CD4-positive, alpha-beta memory T cell (primary cell): ENCODE measurements at regions of chr10 and their contacts with region 1.

Region 1: GRCh38 chr10:98408799-98409198 is 6.2 kb downstream of the PYROXD2 start:
- DNase-seq: no peak
- H3K4me3 ChIP-seq: no peak overlapping the region
- H3K4me3 Mint-ChIP-seq: no peak overlapping the region
- H3K27ac ChIP-seq: no peak overlapping the region
- H3K27ac Mint-ChIP-seq: no peak overlapping the region
- H3K4me1 ChIP-seq: no peaks in the 10 kb centered on the region
- H3K4me1 Mint-ChIP-seq: peaks cover 1 to 9% (median 3%) of the 10 kb centered on the region in 4 donors
- H3K27me3 ChIP-seq: no peaks in the 10 kb centered on the region
- H3K27me3 Mint-ChIP-seq: peaks cover 0 to 1% of the 10 kb centered on the region in 2 donors

Region 2: GRCh38 chr10:98425511-98426352 is 16.9 kb after region 1 on chr10:
- CTCF ChIA-PET with region 1: interaction called, 14 read pairs
- POLR2A ChIA-PET with region 1: interaction called, 9 read pairs
- intact Hi-C with region 1: no loop called
- DNase-seq: peak; percentile 19 to 50 (median 38)
- H3K4me3 ChIP-seq: no peak overlapping the region
- H3K4me3 Mint-ChIP-seq: no peak overlapping the region
- H3K27ac ChIP-seq: no peak overlapping the region
- H3K27ac Mint-ChIP-seq: peak overlapping the region in 2 of 7 donors; percentile 25 to 47
- H3K4me1 ChIP-seq: no peaks in the 10 kb centered on the region
- H3K4me1 Mint-ChIP-seq: peaks cover 0 to 3% (median 0%) of the 10 kb centered on the region in 4 donors
- H3K27me3 ChIP-seq: no peaks in the 10 kb centered on the region
- H3K27me3 Mint-ChIP-seq: no peaks in the 10 kb centered on the region